ENCODE measurements at regions of chr14 and their contacts with region 1.

Region 1: DNA sequence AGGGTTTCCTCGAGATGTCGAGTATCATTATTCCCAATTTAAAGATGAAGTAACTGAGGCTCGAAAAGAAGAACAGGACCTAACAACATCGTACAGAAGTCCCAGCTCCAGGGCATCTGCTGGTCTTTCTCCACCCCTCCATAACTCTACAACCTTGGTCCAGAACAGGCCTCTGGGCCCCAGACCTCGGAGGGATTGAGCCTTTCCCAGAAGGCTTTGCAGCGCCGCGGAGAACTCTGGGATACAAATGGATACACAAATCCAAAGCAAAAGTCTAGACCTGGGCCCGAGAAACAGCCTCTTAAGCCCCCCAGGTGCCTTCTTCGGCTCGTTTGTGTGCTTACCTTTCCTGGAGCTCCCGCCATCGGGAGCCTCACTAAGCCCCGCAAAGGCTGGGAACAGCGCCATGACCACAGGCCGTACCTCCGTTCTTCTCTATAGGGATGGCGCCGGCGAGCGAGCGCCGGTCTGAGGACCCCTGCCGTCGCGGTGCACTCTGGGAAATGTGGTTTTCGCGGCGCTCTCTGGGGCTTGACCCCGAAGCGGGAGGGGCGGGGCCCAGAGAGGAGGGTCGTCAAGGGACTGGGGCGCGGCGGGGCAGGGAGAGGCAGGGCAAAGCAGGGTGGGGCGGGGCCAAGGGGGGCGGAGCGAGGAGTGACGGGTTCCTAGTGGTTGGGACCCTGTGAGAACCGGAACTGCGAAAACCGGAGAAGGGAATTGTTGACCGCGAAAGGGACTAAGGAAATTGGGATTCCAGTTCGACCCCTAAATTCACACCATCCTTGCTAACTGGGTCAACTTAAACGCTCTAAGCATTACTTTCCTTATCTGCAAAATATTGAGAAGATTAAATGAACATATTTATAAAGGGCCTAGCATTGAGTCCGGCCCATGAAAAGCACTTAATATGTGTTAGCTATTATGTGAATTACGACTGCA is at the start of gene NRDE2:
- DNase-seq: peak; percentile 84 to 86
- H3K4me3 ChIP-seq: peak within 1 kb of the TSS; percentile 65
- H3K27ac ChIP-seq: peak within 1 kb of the TSS; percentile 70
- H3K4me1 ChIP-seq: peaks cover 7% of the 10 kb centered on the region
- H3K27me3 ChIP-seq: no peaks in the 10 kb centered on the region
- CTCF ChIP-seq: no peak
- total RNA-seq, gene NRDE2: 6.5 and 10.1 TPM in 2 replicates

Region 2: DNA sequence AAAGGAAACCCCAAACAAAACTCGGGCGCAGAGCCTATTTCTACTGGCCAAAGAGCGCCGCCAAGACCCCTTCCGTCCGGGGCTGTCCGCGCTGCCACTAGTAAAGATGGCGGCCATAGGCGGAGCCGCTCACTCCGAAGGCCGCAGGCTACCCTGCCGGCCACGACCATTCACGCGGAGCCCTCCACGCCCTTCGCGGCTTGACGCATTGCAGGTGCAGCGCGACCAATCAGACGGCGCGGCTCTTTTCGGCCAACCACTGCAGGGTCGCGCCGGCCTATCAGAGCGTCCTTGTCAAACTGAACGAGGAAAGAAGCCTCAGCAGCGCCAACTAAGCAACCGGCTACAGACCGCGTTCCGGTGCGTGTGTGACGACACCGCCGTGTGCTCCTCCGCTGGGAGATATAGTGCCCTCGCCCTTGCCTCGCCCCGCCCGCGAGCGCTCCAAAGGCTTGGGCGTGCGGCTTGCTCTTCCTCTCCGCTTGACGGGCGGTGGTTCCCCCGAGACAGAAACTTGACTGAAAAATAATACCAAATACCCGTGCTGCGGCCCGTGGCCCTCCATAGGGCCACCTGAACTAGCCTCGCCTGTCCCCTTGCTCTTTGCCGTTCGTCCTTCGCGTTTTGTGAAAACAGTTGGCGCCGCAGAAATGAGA is 51.4 kb after region 1 on chr14:
- CTCF ChIA-PET with region 1: no interaction called
- POLR2A ChIA-PET with region 1: no interaction called
- intact Hi-C with region 1: loop called (anchors 5 kb)
- DNase-seq: peak; percentile 87 to 94
- H3K4me3 ChIP-seq: peak overlapping the region; percentile 92
- H3K27ac ChIP-seq: peak overlapping the region; percentile 88
- H3K4me1 ChIP-seq: peaks cover 19% of the 10 kb centered on the region
- H3K27me3 ChIP-seq: no peaks in the 10 kb centered on the region
- CTCF ChIP-seq: no peak